ENCODE measurements at regions of chr2 and their contacts with region 1.

Region 1: DNA sequence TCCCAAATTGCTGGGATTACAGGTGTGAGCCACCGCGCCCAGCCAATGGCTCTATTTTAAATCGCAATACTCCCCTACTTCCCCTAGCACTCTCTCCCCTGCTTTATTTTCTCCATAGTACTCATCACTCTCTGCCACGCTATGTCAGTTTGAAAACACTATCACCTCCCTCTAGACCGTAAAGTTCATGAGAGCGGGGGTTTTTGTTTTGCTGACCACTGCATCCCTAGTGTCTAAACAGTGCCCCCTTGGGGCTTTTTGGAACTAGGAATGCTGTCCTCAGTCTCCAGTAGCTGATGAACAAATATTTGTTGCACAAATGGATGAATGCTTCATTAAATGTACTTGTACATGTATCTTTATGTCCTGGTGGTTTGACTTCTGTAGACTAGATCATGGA is 44.1 kb downstream of the ATOH8 start:
- DNase-seq: peak in 1 of 5 donors; percentile 43
- H3K4me3 ChIP-seq: no peak overlapping the region
- H3K27ac ChIP-seq: no peak overlapping the region
- H3K4me1 ChIP-seq: peaks cover 30% of the 10 kb centered on the region
- H3K27me3 ChIP-seq: no peaks in the 10 kb centered on the region
- CTCF ChIP-seq: peak in 1 of 3 donors; percentile 67
- EP300 ChIP-seq: no peak
- POLR2A ChIP-seq: no peak

Region 2: GRCh38 chr2:85504778-85505323 is 293.1 kb before region 1 on chr2:
- intact Hi-C with region 1: no loop called
- DNase-seq: peak in 1 of 5 donors; percentile 24
- H3K4me3 ChIP-seq: no peak overlapping the region
- H3K27ac ChIP-seq: no peak overlapping the region
- H3K4me1 ChIP-seq: peaks cover 7% of the 10 kb centered on the region
- H3K27me3 ChIP-seq: no peaks in the 10 kb centered on the region
- CTCF ChIP-seq: no peak
- EP300 ChIP-seq: no peak
- POLR2A ChIP-seq: no peak

Region 3: GRCh38 chr2:85750587-85751575 is 47.0 kb before region 1 on chr2:
- intact Hi-C with region 1: loop called in 1 of 4 experiments (anchors 5 kb)
- DNase-seq: peak; percentile 67 to 81 (median 75)
- H3K4me3 ChIP-seq: no peak overlapping the region
- H3K27ac ChIP-seq: no peak overlapping the region
- H3K4me1 ChIP-seq: peaks cover 12% of the 10 kb centered on the region
- H3K27me3 ChIP-seq: no peaks in the 10 kb centered on the region
- CTCF ChIP-seq: peak; percentile 51 to 72 (median 67)
- EP300 ChIP-seq: no peak
- POLR2A ChIP-seq: no peak

Measured in ovary (tissue), 10 donors.